Left ventricle myocardium superior (tissue), 1 donor: ENCODE measurements at regions of chr4 and their contacts with region 1.

Region 1: GRCh38 chr4:4254666-4255065 is 6.6 kb upstream of the TMEM128 start:
- DNase-seq: no peak
- ATAC-seq: no peak

Region 2: DNA sequence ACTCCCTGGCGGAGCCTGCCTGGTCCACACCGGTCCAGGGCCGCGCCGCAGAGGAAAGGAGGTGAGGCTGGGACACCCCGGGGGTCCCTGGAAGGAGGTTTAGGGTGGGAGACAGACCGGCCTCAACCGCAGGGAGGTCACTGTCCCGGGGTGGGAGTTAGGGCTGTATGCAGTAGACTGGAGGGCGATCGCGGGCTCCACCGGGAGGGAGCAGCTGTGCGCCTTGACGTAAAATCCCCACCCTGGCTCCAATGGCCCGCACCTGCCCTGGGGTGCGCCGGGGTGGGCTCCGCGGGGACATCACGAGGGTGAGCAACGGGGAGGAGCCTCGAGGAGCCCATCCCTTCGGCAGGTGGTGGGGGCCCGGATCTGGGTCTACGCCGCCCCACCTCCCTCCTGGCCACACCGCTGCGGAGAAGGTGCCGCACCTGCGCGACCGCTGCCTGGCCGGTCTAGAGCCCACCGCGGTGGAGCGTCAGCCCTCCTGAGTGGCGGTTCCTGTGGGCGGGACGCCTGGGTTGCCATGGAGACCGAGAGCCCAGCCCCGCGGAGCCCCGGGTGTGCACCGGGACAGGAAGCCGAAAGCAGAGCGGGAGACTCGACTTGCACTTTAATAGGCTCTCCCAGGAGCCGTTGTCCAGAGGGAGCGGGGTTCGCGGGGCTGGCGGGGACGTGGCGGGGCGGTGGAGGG is 383.3 kb before region 1 on chr4:
- intact Hi-C with region 1: no loop called
- DNase-seq: no peak
- ATAC-seq: no peak

Region 3: GRCh38 chr4:4334798-4335520 is 80.3 kb after region 1 on chr4:
- intact Hi-C with region 1: loop called (anchors 5 kb)
- DNase-seq: peak; percentile 80
- ATAC-seq: peak; percentile 62